Vagina (tissue), 2 donors: ENCODE measurements at regions of chr13 and their contacts with region 1.

Region 1: GRCh38 chr13:104024416-104025170 is 958.4 kb upstream of the SLC10A2 start:
- DNase-seq: no peak
- H3K4me3 ChIP-seq: no peak overlapping the region
- H3K27ac ChIP-seq: no peak overlapping the region
- H3K4me1 ChIP-seq: no peaks in the 10 kb centered on the region
- H3K27me3 ChIP-seq: no peaks in the 10 kb centered on the region
- CTCF ChIP-seq: no peak
- POLR2A ChIP-seq: no peak

Region 2: GRCh38 chr13:103615771-103616170 is 408.8 kb before region 1 on chr13:
- intact Hi-C with region 1: no loop called
- DNase-seq: no peak
- H3K4me3 ChIP-seq: no peak overlapping the region
- H3K27ac ChIP-seq: no peak overlapping the region
- H3K4me1 ChIP-seq: no peaks in the 10 kb centered on the region
- H3K27me3 ChIP-seq: no peaks in the 10 kb centered on the region
- CTCF ChIP-seq: no peak
- POLR2A ChIP-seq: no peak

Region 3: DNA sequence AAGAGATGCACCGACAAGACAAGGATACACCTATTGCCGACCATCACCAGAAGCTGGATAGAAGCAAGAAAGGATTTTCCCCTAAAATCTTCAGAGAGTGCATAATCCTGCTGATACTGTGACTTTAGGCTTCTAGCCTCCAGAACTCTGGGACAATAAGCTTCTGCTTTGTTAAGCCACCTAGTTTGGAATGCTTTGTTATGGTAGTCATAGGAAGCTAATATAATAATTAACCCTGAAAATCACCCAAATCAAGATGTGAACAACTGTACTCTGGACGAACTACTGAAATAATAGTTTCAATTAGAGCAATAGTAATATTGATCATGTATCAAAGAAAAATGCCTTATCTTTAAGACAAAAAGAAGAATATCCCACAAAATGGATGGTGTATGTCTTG is 1986.2 kb after region 1 on chr13:
- intact Hi-C with region 1: loop called (anchors 5 kb)
- DNase-seq: no peak
- H3K4me3 ChIP-seq: no peak overlapping the region
- H3K27ac ChIP-seq: no peak overlapping the region
- H3K4me1 ChIP-seq: no peaks in the 10 kb centered on the region
- H3K27me3 ChIP-seq: no peaks in the 10 kb centered on the region
- CTCF ChIP-seq: no peak
- POLR2A ChIP-seq: no peak